ENCODE measurements at regions of chr9 and their contacts with region 1.

Region 1: DNA sequence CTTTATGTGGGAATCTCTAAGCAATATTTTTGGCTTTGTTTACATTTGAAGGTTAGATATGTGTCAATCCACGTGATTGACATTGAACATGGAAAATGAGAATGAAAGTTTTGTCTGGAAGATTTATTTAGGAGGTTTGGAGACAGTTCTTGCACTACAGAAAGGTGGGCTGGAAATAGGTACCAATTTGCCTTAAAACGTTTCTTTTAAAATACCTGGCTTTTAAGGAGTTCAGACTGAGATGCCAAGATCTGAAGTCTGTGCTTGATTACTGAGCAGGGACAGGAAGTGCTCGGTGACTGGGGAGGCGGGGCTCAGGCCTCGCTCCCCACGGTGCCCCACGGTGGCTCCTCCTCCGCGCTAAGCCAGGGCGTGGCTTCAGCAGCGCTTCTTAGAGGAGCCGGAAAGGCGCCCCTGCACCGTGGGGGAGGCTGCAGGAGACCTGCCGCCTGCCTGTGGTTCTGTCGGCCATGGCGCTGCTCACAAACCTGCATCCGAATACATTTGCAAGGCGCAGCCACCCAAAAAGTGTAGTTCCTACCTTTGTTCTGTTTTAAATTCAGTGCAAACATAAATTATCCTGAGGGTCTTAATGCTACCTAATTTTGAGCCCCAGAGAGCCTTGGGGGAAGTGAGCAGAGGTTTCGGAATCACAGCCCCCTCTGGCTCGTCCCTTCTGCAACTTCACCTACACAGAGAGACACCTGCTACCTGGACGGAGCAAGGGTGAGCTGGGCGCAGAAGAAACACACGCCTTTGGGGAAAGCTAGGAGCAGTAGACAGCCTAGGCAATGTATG is 49.2 kb downstream of the USP20 start:
- DNase-seq: peak; percentile 85 to 90
- ATAC-seq: peak; percentile 68 to 82 (median 77)
- H3K4me3 ChIP-seq: peak overlapping the region in 9 of 10 donors; percentile 1 to 55 (median 47)
- H3K27ac ChIP-seq: peak overlapping the region in 9 of 10 donors; percentile 74 to 92 (median 80)
- H3K4me1 ChIP-seq: peaks cover 5 to 61% (median 39%) of the 10 kb centered on the region in 9 donors
- H3K27me3 ChIP-seq: no peaks in the 10 kb centered on the region
- CTCF ChIP-seq: no peak

Region 2: DNA sequence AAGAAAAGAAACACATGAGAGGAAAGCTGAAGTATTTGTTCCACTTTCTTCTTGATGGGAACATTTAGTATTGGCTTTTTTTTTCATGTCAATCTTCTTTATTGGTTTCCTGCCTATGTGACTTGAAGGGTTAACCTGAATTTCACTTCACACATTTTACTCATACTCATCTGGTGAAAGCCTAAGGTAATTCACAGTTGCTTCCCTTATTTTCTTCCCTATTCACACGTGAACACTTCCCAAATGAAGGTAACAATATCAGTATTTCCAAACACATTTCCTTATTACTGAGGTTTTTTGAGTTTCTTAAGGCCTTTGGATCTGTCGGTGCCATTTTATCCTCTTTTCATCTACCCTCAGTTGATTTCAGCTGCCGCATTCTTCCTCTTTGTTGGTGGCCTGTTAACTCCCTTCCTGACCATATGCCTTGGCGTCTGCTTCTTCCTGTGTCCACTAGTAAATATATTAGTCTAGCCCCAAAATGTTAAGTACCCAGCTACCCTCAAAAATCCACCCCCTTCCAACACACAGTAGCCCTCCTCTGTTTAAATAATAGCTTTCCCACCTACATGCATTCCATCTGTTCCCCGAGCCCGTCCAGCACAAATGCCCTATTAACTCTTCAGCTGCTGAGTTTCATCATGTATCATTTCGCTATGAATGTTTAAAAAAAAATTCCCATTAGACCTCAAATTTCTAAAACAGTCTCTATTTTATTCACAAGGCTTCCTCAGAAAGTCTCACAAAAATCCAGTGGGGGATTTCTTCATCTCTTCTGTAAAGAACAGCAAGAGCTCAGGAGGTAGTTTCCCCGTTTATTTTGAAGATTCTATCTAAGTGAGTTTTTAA is 48.1 kb after region 1 on chr9:
- intact Hi-C with region 1: loop called in 1 of 10 experiments (anchors 5 kb)
- DNase-seq: peak in 1 of 2 donors; percentile 13
- ATAC-seq: peak in 5 of 8 donors; percentile 38 to 61 (median 48)
- H3K4me3 ChIP-seq: peak overlapping the region in 3 of 10 donors; percentile 2 to 4 (median 3)
- H3K27ac ChIP-seq: peak overlapping the region in 8 of 10 donors; percentile 9 to 80 (median 72)
- H3K4me1 ChIP-seq: peaks cover 3 to 61% (median 40%) of the 10 kb centered on the region in 9 donors
- H3K27me3 ChIP-seq: no peaks in the 10 kb centered on the region
- CTCF ChIP-seq: no peak

Region 3: GRCh38 chr9:130042833-130043653 is 158.6 kb after region 1 on chr9 and contains the start of gene FNBP1:
- intact Hi-C with region 1: loop called in 7 of 10 experiments (anchors 1 to 5 kb)
- DNase-seq: peak; percentile 81 to 84
- ATAC-seq: peak; percentile 93 to 97 (median 96)
- H3K4me3 ChIP-seq: peak within 1 kb of the TSS; percentile 66 to 96 (median 90)
- H3K27ac ChIP-seq: peak within 1 kb of the TSS; percentile 75 to 99 (median 94)
- H3K4me1 ChIP-seq: peaks cover 0 to 67% (median 34%) of the 10 kb centered on the region in 9 donors
- H3K27me3 ChIP-seq: no peaks in the 10 kb centered on the region
- CTCF ChIP-seq: no peak
- total RNA-seq, gene FNBP1: 19.1 to 38.4 (median 23.8) TPM

Region 4: DNA sequence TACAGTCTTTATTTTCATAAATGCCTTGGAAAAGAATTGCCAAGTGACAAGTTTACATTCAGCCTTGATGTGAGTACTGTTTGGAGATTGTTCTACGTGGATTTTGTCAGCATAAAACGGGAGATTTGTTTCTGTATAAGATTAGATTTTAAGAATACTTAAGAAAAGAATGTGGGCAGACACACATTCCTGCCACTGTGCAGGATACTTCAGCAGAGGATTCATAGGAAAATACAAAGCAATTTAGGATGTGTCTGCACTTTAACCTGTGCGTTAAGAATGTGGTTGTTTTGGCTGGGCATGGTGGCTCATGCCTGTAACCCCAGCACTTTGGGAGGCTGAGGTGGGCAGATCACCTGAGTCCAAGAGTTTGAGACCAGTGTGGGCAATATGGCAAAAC is 206.5 kb after region 1 on chr9:
- intact Hi-C with region 1: loop called in 6 of 10 experiments (anchors 5 to 10 kb)
- DNase-seq: no peak
- ATAC-seq: no peak
- H3K4me3 ChIP-seq: no peak overlapping the region
- H3K27ac ChIP-seq: no peak overlapping the region
- H3K4me1 ChIP-seq: no peaks in the 10 kb centered on the region
- H3K27me3 ChIP-seq: no peaks in the 10 kb centered on the region
- CTCF ChIP-seq: no peak

Region 5: DNA sequence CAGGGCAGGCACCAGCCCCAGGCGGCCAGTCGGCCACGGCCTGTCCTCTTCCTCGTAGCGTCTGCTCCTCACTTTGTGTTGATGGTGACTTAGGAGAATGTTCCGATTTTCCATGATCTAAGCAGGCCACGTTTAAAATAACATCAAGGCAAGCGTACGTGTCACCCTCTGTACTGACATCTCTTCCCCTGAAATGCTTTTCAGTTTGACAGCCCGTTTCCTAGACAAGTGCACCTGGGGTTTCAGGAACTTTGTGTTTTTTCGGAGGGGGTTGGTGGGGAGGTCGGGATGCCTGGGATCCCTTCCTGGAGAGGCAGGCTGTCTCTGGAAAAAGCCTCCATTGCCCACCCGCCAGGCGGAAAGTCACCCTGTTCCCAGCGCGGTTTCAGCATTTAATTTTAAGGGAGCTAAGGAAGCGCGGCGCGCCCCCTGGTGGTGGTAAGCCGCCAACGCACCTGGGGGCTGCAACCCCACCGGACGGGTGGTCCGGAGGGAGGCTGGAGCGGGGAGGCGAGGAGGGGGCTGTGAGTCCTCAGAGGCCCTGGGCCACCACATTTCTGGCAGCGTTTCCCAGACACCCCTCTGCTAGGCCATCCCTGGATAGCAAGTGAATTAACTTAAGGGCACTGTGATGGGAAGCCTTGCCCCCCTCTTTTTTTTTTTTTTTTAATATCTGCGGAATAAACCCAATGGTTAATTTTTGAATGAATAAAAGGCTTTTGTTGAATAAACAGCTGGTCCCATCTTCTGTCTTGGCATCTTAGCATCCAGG is 351.7 kb after region 1 on chr9:
- intact Hi-C with region 1: loop called (anchors 2 to 10 kb)
- DNase-seq: peak; percentile 54 to 65
- ATAC-seq: peak; percentile 27 to 75 (median 54)
- H3K4me3 ChIP-seq: peak overlapping the region in 1 of 10 donors; percentile 22
- H3K27ac ChIP-seq: no peak overlapping the region
- H3K4me1 ChIP-seq: peaks cover 0 to 15% (median 5%) of the 10 kb centered on the region in 9 donors
- H3K27me3 ChIP-seq: no peaks in the 10 kb centered on the region
- CTCF ChIP-seq: peak; percentile 98 to 100 (median 99)